Left lung (tissue), 14 donors: ENCODE measurements at regions of chr2 and their contacts with region 1.

Region 1: GRCh38 chr2:219543601-219544358 is at the starts of genes CHPF and TMEM198:
- DNase-seq: peak; percentile 98 to 99 (median 98)
- ATAC-seq: peak; percentile 93
- H3K4me3 ChIP-seq: peak within 1 kb of the TSS; percentile 69 to 75
- H3K27ac ChIP-seq: peak within 1 kb of the TSS; percentile 81 to 92
- H3K4me1 ChIP-seq: peaks cover 8 to 33% of the 10 kb centered on the region in 2 donors
- H3K27me3 ChIP-seq: peaks cover 0 to 87% of the 10 kb centered on the region in 2 donors
- CTCF ChIP-seq: no peak
- polyA plus RNA-seq, gene CHPF: 18.8 to 34.9 (median 24.1) TPM
- polyA plus RNA-seq, gene TMEM198: 2.4 to 4.2 (median 3.4) TPM

Region 2: DNA sequence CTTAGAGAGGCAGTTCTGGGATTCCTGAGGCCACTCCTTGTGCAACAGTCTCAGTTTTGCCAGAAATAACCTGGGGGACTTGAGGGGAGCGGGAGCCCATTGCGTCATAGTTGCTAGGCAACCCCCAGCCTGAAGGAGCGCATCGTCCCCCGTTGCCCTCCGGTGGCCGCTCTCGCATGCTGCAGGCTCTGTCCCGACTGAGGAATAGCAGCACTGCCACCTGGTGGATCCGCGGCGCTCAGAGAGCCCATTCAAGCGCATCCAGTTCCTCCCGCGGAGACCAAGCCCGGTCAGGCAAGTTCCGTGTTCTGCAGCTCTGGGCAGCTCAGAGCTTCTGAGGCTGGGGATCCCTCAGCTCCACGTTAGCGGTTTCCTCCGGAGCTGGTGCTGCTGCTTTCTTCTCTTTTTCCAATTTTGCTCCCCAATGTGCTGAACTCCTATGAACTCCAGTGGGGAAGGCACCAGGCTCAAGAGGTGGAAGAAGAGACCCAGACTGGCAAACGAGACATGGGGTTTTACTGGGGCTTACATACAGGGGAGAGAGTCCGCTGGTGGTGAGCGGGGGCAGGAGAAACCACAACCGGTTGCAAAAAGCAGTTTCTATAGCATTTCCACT is 98.8 kb after region 1 on chr2:
- intact Hi-C with region 1: loop called in 1 of 2 experiments (anchors 5 kb)
- DNase-seq: peak; percentile 94 to 99 (median 97)
- ATAC-seq: peak; percentile 95
- H3K4me3 ChIP-seq: no peak overlapping the region
- H3K27ac ChIP-seq: no peak overlapping the region
- H3K4me1 ChIP-seq: peaks cover 9 to 13% of the 10 kb centered on the region in 2 donors
- H3K27me3 ChIP-seq: peaks cover 0 to 26% of the 10 kb centered on the region in 2 donors
- CTCF ChIP-seq: peak; percentile 97 to 99